Right lobe of liver (tissue), 6 donors: ENCODE measurements at regions of chr2 and their contacts with region 1.

Region 1: GRCh38 chr2:218648088-218648786 is 11.2 kb downstream of the ZNF142 start:
- DNase-seq: peak; percentile 48 to 64 (median 59)
- ATAC-seq: peak; percentile 82 to 85 (median 83)
- H3K4me3 ChIP-seq: no peak overlapping the region
- H3K27ac ChIP-seq: no peak overlapping the region
- H3K4me1 ChIP-seq: peaks cover 0 to 19% (median 0%) of the 10 kb centered on the region in 4 donors
- H3K27me3 ChIP-seq: no peaks in the 10 kb centered on the region
- CTCF ChIP-seq: peak; percentile 75 to 89 (median 83)
- POLR2A ChIP-seq: no peak

Region 2: DNA sequence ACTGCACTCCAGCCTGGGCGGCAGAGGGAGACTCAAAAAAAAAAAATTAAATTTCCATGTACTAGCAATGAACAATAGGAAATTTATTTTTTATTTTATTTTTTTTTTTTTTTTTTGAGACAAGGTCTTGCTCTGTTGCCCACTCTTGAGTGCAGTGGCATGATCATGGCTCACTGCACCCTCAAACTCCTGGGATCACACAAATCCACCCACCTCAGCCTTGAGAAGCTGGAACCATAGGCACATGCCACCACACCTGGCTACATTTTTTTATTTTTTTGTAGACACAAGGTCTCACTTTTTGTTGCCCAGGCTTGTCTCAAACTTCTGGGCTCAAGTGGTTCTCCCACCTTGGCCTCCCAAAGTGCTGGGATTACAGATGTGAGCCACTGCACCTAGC is 62.7 kb before region 1 on chr2:
- intact Hi-C with region 1: loop called in 1 of 2 experiments (anchors 10 kb)
- DNase-seq: no peak
- ATAC-seq: no peak
- H3K4me3 ChIP-seq: no peak overlapping the region
- H3K27ac ChIP-seq: no peak overlapping the region
- H3K4me1 ChIP-seq: no peaks in the 10 kb centered on the region
- H3K27me3 ChIP-seq: no peaks in the 10 kb centered on the region
- CTCF ChIP-seq: no peak
- POLR2A ChIP-seq: no peak

Region 3: GRCh38 chr2:218798767-218799504 is 150.7 kb after region 1 on chr2:
- intact Hi-C with region 1: no loop called
- DNase-seq: no peak
- ATAC-seq: no peak
- H3K4me3 ChIP-seq: no peak overlapping the region
- H3K27ac ChIP-seq: no peak overlapping the region
- H3K4me1 ChIP-seq: peaks cover 0 to 9% (median 2%) of the 10 kb centered on the region in 4 donors
- H3K27me3 ChIP-seq: no peaks in the 10 kb centered on the region
- CTCF ChIP-seq: no peak
- POLR2A ChIP-seq: no peak